Mammary epithelial cell (primary cell): ENCODE measurements at regions of chr12 and their contacts with region 1.

Region 1: DNA sequence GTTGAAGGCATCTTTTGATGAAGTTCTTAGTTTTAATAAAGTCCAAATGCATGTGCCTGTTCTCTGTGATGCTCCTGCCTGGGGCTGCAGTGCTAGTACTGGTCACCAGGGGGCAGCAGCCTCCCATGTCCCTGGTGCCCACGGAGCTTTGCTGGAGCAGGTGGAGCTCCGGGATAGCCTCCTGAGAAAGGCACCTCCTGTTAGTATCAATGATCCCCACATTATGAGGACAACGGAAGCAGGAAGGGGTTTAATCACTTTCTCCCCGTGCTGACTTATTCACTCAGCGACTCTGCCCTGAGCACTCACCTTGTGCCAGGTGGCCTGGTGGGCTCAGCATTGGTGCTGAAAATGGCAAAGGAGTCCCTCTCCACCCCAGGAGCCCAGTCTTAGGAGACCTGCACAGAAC is 123.0 kb upstream of the PZP start:
- DNase-seq: peak; percentile 54
- H3K4me3 ChIP-seq: no peak overlapping the region
- H3K27ac ChIP-seq: no peak overlapping the region
- H3K4me1 ChIP-seq: peaks cover 5% of the 10 kb centered on the region
- H3K27me3 ChIP-seq: no peaks in the 10 kb centered on the region
- CTCF ChIP-seq: peak; percentile 98

Region 2: GRCh38 chr12:9240776-9241175 is 90.4 kb before region 1 on chr12:
- CTCF ChIA-PET with region 1: no interaction called
- dilution Hi-C with region 1: no loop called
- in situ Hi-C with region 1: no loop called
- intact Hi-C with region 1: no loop called
- DNase-seq: no peak
- H3K4me3 ChIP-seq: peak overlapping the region in 1 of 3 experiments; percentile 22
- H3K27ac ChIP-seq: no peak overlapping the region
- H3K4me1 ChIP-seq: peaks cover 3% of the 10 kb centered on the region
- H3K27me3 ChIP-seq: no peaks in the 10 kb centered on the region
- CTCF ChIP-seq: no peak

Region 3: DNA sequence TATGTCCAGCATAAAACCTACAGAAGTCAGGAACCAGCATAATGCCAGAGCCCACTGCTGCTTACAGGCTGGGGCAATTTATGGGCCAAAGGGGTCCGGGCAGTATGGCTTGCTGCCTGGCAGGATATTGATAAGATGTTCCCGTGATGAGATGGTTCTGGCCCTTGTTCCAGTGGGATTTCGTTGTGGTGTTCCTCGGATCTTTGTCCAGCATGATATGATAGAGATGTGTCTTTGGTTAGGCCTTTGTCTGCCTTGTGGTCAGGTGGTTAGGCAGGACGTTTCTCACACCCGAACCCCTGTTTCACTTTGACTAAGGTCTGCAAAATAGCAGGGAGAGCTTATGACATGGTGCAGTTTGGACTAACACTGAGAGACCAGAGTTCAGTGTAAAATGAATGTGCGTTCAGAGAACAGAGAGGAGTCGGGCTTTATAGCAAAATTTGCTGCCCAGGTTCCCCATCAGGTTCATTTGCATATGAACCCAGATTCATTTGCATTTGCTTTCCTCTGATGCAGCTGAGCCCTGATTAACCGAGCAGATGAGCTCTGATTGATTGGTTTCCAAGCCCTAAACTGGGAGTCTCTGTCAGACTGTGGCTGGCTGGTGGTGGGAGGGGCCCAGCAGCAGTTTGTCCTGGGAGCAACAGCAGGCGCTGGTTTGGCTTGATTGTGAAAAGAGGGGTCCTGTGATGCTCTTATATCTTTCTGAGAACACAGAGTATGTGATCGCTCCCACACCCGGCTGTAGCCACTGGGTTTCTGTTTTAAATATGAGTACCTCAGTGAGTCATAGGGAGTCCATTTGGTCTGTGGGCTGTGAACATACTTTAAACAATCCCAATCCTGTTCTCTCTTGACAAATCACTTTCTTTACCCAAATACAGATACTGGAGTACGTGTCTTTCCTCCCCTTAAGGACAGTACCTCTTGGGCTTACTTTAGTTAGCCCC is 33.3 kb after region 1 on chr12:
- CTCF ChIA-PET with region 1: interaction called, 3 read pairs
- dilution Hi-C with region 1: no loop called
- in situ Hi-C with region 1: no loop called
- intact Hi-C with region 1: loop called (anchors 2 kb)
- DNase-seq: peak; percentile 99
- H3K4me3 ChIP-seq: peak overlapping the region; percentile 6 to 22 (median 21)
- H3K27ac ChIP-seq: peak overlapping the region; percentile 98
- H3K4me1 ChIP-seq: peaks cover 36% of the 10 kb centered on the region
- H3K27me3 ChIP-seq: no peaks in the 10 kb centered on the region
- CTCF ChIP-seq: no peak

Region 4: GRCh38 chr12:9378430-9378835 is 47.2 kb after region 1 on chr12:
- CTCF ChIA-PET with region 1: interaction called, 7 read pairs
- dilution Hi-C with region 1: loop called (anchors 5 kb)
- in situ Hi-C with region 1: loop called in 1 of 2 experiments (anchors 5 kb)
- intact Hi-C with region 1: no loop called
- DNase-seq: no peak
- H3K4me3 ChIP-seq: no peak overlapping the region
- H3K27ac ChIP-seq: no peak overlapping the region
- H3K4me1 ChIP-seq: no peaks in the 10 kb centered on the region
- H3K27me3 ChIP-seq: peaks cover 2% of the 10 kb centered on the region
- CTCF ChIP-seq: peak; percentile 45 to 69

Region 5: DNA sequence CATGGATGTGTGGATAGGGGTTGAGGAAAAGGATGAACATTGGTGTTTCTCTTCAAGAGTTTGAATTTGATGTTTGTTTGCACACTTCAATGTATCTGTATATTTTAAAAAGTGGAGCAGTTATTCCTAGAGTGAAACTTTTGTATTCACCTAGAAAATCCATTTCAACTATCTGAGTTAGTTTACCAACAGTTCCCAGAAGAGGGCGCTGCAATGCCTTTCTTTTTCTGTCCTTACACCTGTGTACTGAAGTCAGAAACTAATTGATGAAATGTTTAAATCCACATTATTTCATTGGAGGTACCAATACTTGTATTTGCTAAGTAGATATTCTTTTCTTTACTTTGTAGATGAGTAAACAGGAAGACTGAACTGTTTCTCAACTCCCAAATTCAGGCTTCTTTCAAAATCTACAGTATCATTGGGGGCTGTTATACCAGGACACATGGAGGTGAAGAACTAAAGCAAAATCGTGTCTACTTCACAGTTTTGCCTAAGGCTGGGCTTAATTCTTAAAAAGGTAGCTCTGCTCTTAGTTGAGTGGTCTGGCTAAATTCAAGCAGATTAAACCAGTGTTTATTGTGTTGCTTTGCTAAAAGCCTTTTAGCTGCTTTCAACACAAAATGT is 303.1 kb after region 1 on chr12:
- CTCF ChIA-PET with region 1: no interaction called
- dilution Hi-C with region 1: no loop called
- in situ Hi-C with region 1: no loop called
- intact Hi-C with region 1: loop called (anchors 1 kb)
- DNase-seq: peak; percentile 39
- H3K4me3 ChIP-seq: no peak overlapping the region
- H3K27ac ChIP-seq: no peak overlapping the region
- H3K4me1 ChIP-seq: peaks cover 28% of the 10 kb centered on the region
- H3K27me3 ChIP-seq: no peaks in the 10 kb centered on the region
- CTCF ChIP-seq: peak; percentile 62 to 70